ENCODE measurements at regions of chr7 and their contacts with region 1.

Region 1: DNA sequence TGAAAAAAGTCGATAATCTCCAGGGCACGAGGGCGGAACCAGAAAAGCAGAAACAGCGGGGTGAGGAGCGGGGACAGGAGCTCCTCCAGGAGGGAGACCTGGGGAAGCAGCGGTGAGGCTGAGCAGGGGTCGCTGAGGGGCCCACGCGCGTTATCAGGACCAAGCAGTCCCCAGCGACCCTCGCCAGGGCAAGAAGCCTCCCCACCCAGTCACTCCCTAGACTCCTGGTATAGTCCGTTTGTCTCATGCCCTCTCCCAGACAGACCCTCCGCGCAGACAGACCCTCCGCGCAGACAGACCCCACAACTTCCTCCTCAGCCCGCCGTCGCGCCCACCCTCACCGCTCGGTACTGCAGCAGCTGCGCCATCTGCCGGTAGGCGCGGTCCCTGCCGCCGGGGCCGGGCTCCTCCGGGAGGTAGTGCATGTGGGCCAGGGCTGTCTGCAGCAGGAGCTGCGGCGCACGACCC is 6.3 kb downstream of the ATG9B start:
- DNase-seq: peak; percentile 61
- ATAC-seq: peak; percentile 78
- H3K4me3 ChIP-seq: peak overlapping the region; percentile 49; the same call in 1 of the 2 replicates
- H3K27ac ChIP-seq: no peak overlapping the region
- H3K4me1 ChIP-seq: peaks cover 10% of the 10 kb centered on the region; the same call in 1 of the 2 replicates
- H3K27me3 ChIP-seq: no peaks in the 10 kb centered on the region
- CTCF ChIP-seq: peak; percentile 94

Region 2: GRCh38 chr7:150695654-150696053 is 322.3 kb before region 1 on chr7:
- CTCF ChIA-PET with region 1: no interaction called
- POLR2A ChIA-PET with region 1: no interaction called
- intact Hi-C with region 1: no loop called
- DNase-seq: no peak
- ATAC-seq: no peak
- H3K4me3 ChIP-seq: no peak overlapping the region
- H3K27ac ChIP-seq: no peak overlapping the region
- H3K4me1 ChIP-seq: no peaks in the 10 kb centered on the region
- H3K27me3 ChIP-seq: peaks cover 18% of the 10 kb centered on the region
- CTCF ChIP-seq: no peak

Region 3: GRCh38 chr7:150898475-150899011 is 119.4 kb before region 1 on chr7:
- CTCF ChIA-PET with region 1: interaction called, 6 read pairs
- POLR2A ChIA-PET with region 1: no interaction called
- intact Hi-C with region 1: loop called (anchors 2 kb)
- DNase-seq: peak; percentile 72
- ATAC-seq: peak; percentile 83
- H3K4me3 ChIP-seq: no peak overlapping the region
- H3K27ac ChIP-seq: no peak overlapping the region
- H3K4me1 ChIP-seq: peaks cover 16% of the 10 kb centered on the region
- H3K27me3 ChIP-seq: no peaks in the 10 kb centered on the region
- CTCF ChIP-seq: peak; percentile 91

Region 4: DNA sequence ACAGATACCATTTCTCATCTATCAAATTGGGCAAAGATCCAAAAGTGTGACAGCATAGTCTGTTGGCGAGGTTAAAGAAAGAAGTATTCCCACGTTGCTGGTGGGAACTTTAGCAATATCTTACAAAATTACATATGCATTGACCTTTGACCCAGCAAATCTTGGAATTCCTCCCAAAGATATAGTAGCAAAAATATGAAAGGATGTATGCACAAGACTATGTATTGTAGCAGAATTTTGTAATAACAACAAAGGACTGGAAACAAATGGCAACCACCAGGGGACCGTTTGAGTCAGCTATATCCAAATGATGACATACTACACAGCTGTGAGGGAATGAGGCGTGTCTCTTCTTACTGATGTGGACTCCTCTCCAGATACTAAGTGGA is 90.0 kb before region 1 on chr7:
- CTCF ChIA-PET with region 1: interaction called, 11 read pairs
- POLR2A ChIA-PET with region 1: no interaction called
- intact Hi-C with region 1: no loop called
- DNase-seq: peak; percentile 19
- ATAC-seq: peak; percentile 40; the same call in 1 of the 2 replicates
- H3K4me3 ChIP-seq: no peak overlapping the region
- H3K27ac ChIP-seq: no peak overlapping the region
- H3K4me1 ChIP-seq: no peaks in the 10 kb centered on the region
- H3K27me3 ChIP-seq: peaks cover 38% of the 10 kb centered on the region; the same call in 1 of the 2 replicates
- CTCF ChIP-seq: peak; percentile 29; the same call in 1 of the 2 replicates

Region 5: DNA sequence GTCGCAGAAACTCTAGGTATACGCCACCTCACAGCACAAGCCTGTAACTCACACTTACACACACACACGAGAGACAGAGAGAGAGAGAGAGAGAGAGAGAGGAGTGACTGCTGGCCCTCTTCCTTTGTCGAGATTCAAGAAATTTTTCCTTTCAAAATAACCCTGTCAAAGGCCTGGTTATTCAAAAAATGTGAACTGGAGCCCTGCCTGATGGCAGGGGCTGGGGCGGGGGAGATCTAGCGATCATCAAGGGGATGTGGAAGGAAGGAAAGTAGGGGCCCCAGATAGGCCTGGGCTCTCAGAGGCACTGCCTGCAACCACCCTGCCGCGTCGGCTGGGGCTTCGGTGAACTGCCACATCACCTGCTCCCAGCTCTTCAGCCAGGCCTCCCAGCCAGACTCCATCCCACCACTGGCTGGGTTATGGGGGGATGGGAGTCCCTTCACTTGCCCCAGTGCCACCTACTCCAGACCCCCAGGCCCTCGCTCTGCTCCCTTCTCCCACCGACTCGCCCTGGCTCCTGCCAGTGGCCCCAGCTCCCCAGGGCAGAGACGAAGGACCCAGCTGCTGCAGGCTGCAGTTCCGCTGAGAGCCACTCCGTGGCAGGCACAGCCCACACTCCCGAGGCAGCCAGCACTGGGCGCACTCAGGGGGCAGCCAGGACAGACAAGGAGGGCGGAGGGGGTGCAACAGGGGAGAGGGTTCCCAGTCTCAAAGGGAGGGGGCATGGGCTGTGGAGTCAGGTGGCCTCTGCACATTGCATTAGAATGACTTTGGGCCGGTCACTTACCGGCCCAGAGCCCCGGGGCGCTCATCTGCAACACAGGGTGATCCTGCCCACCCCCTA is 55.2 kb before region 1 on chr7:
- CTCF ChIA-PET with region 1: interaction called, 9 read pairs
- POLR2A ChIA-PET with region 1: no interaction called
- intact Hi-C with region 1: loop called (anchors 2 kb)
- DNase-seq: peak; percentile 39
- ATAC-seq: peak; percentile 86
- H3K4me3 ChIP-seq: no peak overlapping the region
- H3K27ac ChIP-seq: no peak overlapping the region
- H3K4me1 ChIP-seq: no peaks in the 10 kb centered on the region
- H3K27me3 ChIP-seq: peaks cover 6% of the 10 kb centered on the region; the same call in 1 of the 2 replicates
- CTCF ChIP-seq: peak; percentile 87

Measured in PC-3 (cell line).